ENCODE measurements at regions of chr9 and their contacts with region 1.

Region 1: GRCh38 chr9:16315720-16316119 is 554.8 kb downstream of the BNC2 start:
- DNase-seq: no peak
- ATAC-seq: no peak
- H3K4me3 Mint-ChIP-seq: no peak overlapping the region
- H3K27ac Mint-ChIP-seq: no peak overlapping the region
- H3K4me1 Mint-ChIP-seq: no peaks in the 10 kb centered on the region
- H3K27me3 Mint-ChIP-seq: no peaks in the 10 kb centered on the region
- CTCF ChIP-seq: no peak

Region 2: DNA sequence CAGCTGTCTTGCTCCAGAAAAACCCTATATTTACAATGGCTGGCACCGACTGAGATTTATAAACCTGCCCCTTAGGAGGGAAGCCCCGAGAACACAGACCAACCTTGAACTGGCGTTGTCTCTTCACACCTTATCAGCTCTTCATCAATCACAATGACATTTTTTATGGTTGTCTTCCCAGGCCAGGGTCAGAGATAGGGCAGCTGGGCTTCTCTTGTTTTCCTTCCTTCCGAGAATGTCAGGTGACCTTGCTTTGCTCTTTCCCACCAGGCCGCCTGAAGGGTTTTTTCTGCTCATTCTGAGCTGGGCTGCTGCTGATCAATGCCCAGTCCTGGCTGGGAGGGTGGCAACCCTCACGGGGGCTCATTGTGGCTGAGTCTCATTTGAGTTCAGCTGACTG is 143.8 kb before region 1 on chr9:
- CTCF ChIA-PET with region 1: no interaction called
- POLR2A ChIA-PET with region 1: no interaction called
- intact Hi-C with region 1: no loop called
- DNase-seq: no peak
- ATAC-seq: no peak
- H3K4me3 Mint-ChIP-seq: no peak overlapping the region
- H3K27ac Mint-ChIP-seq: no peak overlapping the region
- H3K4me1 Mint-ChIP-seq: no peaks in the 10 kb centered on the region
- H3K27me3 Mint-ChIP-seq: no peaks in the 10 kb centered on the region
- CTCF ChIP-seq: no peak

Region 3: DNA sequence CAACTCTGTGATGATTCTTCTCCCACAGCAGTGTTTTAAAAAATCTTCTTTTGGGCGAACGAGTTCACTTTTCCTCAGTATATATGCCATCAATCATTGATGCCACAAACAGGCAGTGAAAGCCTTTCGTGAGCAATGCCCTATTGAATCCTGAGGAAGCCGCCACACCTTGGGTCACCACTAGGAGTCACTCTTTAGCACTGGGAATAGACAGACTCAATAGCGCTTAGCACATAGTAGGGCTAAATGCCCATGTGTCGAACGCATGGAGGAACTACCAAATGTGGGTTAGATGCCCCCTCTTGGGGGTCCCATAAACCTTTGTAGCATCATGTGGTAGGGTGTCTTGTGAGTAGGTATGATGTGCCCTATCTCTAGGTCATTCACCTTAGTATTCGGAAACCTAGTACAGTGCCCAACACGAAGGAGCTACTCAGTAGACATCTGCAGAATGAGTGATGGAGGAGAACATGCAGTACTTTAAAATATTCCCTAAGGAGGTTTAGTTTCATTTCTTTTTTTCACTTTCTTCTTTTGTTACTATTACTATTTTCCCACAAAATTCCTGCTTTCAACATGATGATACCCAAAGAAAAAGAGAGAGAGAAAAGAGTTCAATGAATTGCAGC is 49.0 kb before region 1 on chr9:
- CTCF ChIA-PET with region 1: no interaction called
- POLR2A ChIA-PET with region 1: no interaction called
- intact Hi-C with region 1: loop called (anchors 5 kb)
- DNase-seq: no peak
- ATAC-seq: no peak
- H3K4me3 Mint-ChIP-seq: no peak overlapping the region
- H3K27ac Mint-ChIP-seq: no peak overlapping the region
- H3K4me1 Mint-ChIP-seq: no peaks in the 10 kb centered on the region
- H3K27me3 Mint-ChIP-seq: no peaks in the 10 kb centered on the region
- CTCF ChIP-seq: no peak